Activated CD8-positive, alpha-beta T cell treated with anti-CD3 and anti-CD28 coated beads for 36 hours (primary cell): ENCODE measurements at regions of chr20 and their contacts with region 1.

Region 1: DNA sequence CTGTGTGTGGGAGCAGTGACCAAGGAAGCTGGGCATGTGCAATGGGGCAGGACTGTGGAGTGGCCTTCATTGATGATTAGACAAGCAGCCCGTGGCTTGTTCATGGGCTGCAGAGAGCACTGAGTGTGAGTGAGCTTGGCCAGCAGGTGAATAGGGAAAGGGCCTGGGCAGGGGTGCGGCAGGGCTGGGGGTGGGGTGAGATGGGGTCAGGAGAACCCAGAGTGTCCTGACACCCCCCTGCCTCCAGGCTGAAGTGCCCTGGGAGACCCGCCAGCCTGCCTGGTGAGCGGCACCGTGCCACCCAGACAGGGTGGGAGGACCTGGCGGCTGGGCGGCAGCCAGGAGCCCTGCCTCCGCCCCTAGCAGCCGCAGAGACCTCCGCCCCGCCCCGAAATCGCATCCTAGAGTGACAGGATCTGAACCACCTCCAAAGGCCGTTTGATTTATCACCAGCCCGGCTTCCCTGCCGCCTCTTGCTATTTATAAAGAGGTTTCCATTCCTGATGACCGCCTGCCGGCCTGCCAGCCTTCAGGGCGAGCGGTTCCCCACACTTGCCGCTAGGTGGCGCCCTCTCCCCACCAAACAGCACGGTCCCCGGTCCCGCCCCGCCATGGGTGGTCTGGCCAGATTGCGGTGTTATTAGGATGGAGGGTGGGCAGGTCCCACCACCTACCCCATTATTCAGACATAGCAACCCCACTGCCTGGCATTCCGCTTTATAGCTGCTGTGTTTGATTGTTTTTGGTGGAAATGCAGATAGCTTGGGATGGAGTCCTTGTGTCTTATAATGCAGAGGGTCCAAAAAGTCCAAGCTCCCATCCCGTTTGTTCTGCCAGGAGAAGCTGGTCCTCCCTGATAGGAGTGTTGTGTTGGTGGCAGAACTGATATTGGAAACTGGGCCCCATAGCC is 3.5 kb downstream of the MYLK2 start:
- DNase-seq: peak; percentile 78
- ATAC-seq: peak; percentile 92
- H3K4me3 Mint-ChIP-seq: no peak overlapping the region
- H3K27ac Mint-ChIP-seq: no peak overlapping the region
- H3K4me1 Mint-ChIP-seq: peaks cover 2% of the 10 kb centered on the region
- H3K27me3 Mint-ChIP-seq: peaks cover 2% of the 10 kb centered on the region
- CTCF ChIP-seq: peak; percentile 99

Region 2: GRCh38 chr20:31811796-31812728 is 10.6 kb before region 1 on chr20:
- CTCF ChIA-PET with region 1: interaction called, 32 read pairs
- POLR2A ChIA-PET with region 1: interaction called, 7 read pairs
- intact Hi-C with region 1: no loop called
- DNase-seq: no peak
- ATAC-seq: no peak
- H3K4me3 Mint-ChIP-seq: no peak overlapping the region
- H3K27ac Mint-ChIP-seq: no peak overlapping the region
- H3K4me1 Mint-ChIP-seq: no peaks in the 10 kb centered on the region
- H3K27me3 Mint-ChIP-seq: no peaks in the 10 kb centered on the region
- CTCF ChIP-seq: no peak

Region 3: DNA sequence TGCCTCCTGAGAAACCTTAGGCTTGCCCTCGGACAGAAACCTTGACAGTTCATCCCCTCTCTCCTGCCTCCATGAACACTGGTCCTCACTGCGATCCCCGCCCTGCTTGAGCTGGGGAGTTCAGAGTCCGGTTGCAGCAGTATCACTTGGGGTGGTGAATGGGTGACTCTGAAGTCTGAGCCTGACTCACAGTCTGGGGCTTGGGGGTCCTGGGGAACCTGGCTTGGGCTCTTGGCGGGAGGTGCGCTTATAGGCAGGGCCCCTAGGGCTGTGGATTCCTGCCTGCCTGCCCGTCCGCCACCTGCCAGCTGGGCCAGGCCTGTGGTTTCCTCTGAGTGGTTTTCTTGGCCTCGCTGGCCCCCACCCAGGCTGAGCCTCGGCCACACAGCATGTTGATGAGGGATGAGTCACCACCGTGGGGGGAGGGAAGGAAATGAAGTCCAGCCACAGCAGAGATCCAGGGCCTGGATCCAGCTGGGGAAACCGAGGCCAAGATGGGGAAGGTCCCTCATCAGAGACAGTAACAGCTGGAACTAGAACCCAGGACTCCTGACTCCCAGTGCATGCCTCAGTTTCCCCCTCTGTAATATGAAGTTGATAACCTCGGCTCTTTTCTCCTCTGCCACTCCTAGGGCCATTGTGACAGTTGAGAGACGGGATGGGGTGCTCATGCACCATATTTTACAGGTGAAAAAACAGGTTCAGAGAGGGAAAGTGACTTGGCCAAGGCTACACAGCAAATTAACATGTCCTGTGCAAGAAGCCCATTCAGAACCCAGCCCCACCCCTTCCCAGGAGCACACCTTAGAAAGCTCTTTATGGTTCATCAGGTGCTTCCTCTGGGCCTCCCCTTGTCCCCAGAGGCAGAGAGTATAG is 13.5 kb after region 1 on chr20:
- CTCF ChIA-PET with region 1: interaction called, 46 read pairs
- POLR2A ChIA-PET with region 1: interaction called, 3 read pairs
- intact Hi-C with region 1: no loop called
- DNase-seq: peak; percentile 64
- ATAC-seq: peak; percentile 70
- H3K4me3 Mint-ChIP-seq: no peak overlapping the region
- H3K27ac Mint-ChIP-seq: no peak overlapping the region
- H3K4me1 Mint-ChIP-seq: peaks cover 8% of the 10 kb centered on the region
- H3K27me3 Mint-ChIP-seq: no peaks in the 10 kb centered on the region
- CTCF ChIP-seq: no peak

Region 4: GRCh38 chr20:31845300-31845863 is 22.7 kb after region 1 on chr20 and contains the start of gene FOXS1:
- CTCF ChIA-PET with region 1: interaction called, 51 read pairs
- POLR2A ChIA-PET with region 1: no interaction called
- intact Hi-C with region 1: no loop called
- DNase-seq: no peak
- ATAC-seq: no peak
- H3K4me3 Mint-ChIP-seq: no peak within 1 kb of the TSS
- H3K27ac Mint-ChIP-seq: no peak within 1 kb of the TSS
- H3K4me1 Mint-ChIP-seq: no peaks in the 10 kb centered on the region
- H3K27me3 Mint-ChIP-seq: peaks cover 9% of the 10 kb centered on the region
- CTCF ChIP-seq: no peak
- total RNA-seq, gene FOXS1: not detected

Region 5: DNA sequence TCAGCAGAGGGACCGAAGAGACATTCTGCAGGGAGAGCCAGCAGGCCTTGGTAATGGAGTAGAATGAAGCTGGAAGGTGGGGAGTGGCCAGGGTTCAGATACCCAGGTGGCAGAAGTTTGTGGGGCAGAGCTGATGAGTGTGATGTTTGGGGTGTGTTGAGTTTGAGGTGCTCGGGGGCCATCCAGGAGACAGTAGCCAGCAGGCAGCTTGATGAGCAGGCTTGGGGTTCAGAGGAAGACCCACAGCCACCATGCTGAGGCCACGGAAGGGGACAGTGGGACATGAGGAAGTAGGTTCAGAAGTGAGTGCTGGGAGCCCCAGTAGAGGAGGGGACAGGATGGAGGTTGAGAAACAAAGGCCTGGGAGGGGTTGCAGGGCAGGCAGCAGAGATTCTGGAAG is 33.8 kb after region 1 on chr20:
- CTCF ChIA-PET with region 1: interaction called, 16 read pairs
- POLR2A ChIA-PET with region 1: no interaction called
- intact Hi-C with region 1: no loop called
- DNase-seq: no peak
- ATAC-seq: no peak
- H3K4me3 Mint-ChIP-seq: no peak overlapping the region
- H3K27ac Mint-ChIP-seq: no peak overlapping the region
- H3K4me1 Mint-ChIP-seq: peaks cover 4% of the 10 kb centered on the region
- H3K27me3 Mint-ChIP-seq: peaks cover 22% of the 10 kb centered on the region
- CTCF ChIP-seq: no peak